Ovary (tissue), 10 donors: ENCODE measurements at regions of chr3 and their contacts with region 1.

Region 1: DNA sequence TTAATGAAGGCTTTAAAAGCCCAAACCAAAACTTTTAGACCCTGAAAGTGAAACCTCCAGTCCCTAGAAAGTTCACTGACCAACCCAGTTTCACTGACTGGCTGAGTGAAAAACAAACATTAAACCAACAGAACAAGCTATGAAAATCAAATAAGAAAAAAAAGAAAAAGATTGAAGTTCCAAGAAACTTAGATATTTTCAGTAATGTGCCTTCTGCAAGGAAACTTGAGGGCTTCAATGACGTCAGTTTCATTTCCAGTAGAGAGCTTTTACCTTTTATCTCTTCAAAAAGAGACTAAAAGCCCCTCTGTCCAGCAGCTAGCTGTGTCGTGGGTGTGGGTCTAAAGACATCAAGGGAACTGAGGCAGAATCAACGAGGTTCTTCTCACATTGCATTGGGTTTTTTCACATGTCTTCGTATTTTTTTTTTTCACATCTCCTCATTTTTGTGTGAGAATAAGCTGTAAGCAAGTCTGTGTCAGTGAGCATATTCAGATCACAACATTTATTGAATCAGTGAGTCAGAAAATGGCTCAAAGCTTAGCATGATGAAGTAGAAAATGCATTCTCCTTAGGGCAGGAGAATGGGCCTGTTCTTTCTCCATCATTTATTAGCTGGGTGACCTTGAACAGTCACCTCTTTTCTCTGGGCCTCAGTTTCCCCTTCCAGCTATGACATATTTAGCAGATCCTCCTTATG is 54.8 kb upstream of the BCL6 start:
- DNase-seq: no peak
- H3K4me3 ChIP-seq: no peak overlapping the region
- H3K27ac ChIP-seq: no peak overlapping the region
- H3K4me1 ChIP-seq: no peaks in the 10 kb centered on the region
- H3K27me3 ChIP-seq: no peaks in the 10 kb centered on the region
- CTCF ChIP-seq: no peak
- EP300 ChIP-seq: no peak
- POLR2A ChIP-seq: no peak

Region 2: GRCh38 chr3:187748050-187748481 is 52.0 kb before region 1 on chr3:
- intact Hi-C with region 1: no loop called
- DNase-seq: peak; percentile 89 to 96 (median 94)
- H3K4me3 ChIP-seq: no peak overlapping the region
- H3K27ac ChIP-seq: peak overlapping the region in 1 of 2 donors; percentile 100
- H3K4me1 ChIP-seq: no peaks in the 10 kb centered on the region
- H3K27me3 ChIP-seq: no peaks in the 10 kb centered on the region
- CTCF ChIP-seq: peak; percentile 83 to 91 (median 90)
- EP300 ChIP-seq: no peak
- POLR2A ChIP-seq: peak; percentile 7

Region 3: DNA sequence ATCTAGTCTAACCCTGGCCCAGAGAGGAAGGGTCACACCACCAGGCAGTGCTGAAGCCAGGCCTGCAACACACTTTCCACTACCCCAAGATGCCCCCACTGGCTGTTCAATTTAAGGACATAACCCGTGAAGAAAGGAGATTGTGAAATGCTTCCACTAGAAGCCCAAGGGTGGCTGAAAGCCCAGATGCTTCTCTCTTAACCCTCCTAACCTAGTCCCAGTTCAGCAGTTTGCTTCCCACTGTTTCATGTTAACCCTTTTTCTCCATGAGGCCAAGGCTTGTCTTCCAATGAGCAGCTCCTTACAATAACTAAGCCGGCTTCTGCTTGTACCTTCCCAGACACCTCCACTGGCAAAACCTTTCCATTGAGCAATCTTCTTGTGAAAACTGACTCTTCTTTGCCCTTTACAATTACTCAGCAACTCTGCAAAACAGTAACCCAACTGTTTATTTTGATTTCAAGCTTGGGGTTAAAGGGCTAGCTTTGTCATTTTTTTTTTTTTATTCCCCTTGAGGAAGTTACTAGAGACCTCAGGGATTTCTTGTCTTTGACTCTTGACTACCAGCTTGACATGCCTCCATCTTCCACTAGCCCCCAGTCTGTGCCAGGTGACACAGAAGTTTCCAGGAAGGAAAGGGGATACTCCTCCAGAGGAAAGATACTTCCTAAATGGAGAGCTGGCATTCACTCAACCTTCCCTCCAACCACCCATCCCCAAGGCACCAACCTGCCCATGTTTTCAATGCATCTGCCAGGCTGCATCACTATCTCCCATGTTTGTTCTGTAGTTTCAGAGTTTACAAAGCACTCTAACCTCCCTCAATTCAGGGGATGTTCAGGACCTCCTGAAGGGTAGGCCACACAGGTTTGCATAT is 155.2 kb after region 1 on chr3:
- intact Hi-C with region 1: loop called in 1 of 4 experiments (anchors 10 kb)
- DNase-seq: peak in 3 of 5 donors; percentile 18 to 56 (median 32)
- H3K4me3 ChIP-seq: no peak overlapping the region
- H3K27ac ChIP-seq: no peak overlapping the region
- H3K4me1 ChIP-seq: peaks cover 2% of the 10 kb centered on the region
- H3K27me3 ChIP-seq: no peaks in the 10 kb centered on the region
- CTCF ChIP-seq: no peak
- EP300 ChIP-seq: peak; percentile 32
- POLR2A ChIP-seq: no peak